ENCODE measurements at regions of chr6 and their contacts with region 1.

Region 1: DNA sequence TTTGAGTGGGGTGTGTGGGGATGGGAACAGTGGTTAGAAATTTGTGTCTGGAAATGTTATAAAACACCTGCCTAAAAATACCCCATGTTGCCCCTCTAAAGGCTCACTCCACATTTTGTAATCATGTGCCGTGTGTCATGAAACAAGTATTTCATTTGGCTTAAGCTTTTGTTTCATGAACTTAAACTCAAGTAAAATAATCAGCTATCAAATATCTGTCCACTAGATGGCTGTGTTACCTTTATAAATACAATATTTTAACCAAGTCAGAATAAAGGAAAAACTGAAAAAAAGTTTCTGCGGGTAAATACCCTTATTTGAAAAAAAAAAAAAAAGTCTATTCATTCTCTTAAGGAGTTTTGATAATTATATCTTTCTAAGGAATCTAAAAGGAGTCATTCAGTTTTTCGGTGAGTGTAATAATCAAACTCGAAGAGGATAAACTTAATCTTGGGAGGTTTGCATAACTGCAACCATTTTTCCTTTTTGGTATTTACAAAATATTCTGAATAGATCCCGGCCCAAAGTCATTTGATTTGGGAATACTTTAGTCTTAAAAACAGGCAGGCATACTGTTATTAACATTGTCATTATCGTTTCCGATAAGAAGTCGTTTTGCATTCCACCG is 29.9 kb upstream of the MTRF1L start:
- DNase-seq: no peak
- ATAC-seq: peak; percentile 46; the same call in 2 of the 3 replicates
- H3K4me3 ChIP-seq: no peak overlapping the region
- H3K27ac ChIP-seq: no peak overlapping the region
- H3K4me1 ChIP-seq: no peaks in the 10 kb centered on the region
- H3K27me3 ChIP-seq: peaks cover 0 to 3% of the 10 kb centered on the region in 2 experiments; a peak in 1 of 4 replicates
- CTCF ChIP-seq: peak in 2 of 3 experiments; percentile 13; a peak in 3 of 6 replicates
- EP300 ChIP-seq: no peak
- POLR2A ChIP-seq: no peak
- RAD21 ChIP-seq: peak; percentile 35; the same call in 1 of the 2 replicates

Region 2: GRCh38 chr6:153231048-153231646 is 198.8 kb after region 1 on chr6:
- CTCF ChIA-PET with region 1: interaction called, 7 read pairs
- POLR2A ChIA-PET with region 1: no interaction called
- RAD21 ChIA-PET with region 1: no interaction called
- SMC1A ChIA-PET with region 1: interaction called, 3 read pairs
- in situ Hi-C with region 1: no loop called
- intact Hi-C with region 1: loop called (anchors 10 kb)
- DNase-seq: no peak
- ATAC-seq: peak; percentile 57
- H3K4me3 ChIP-seq: no peak overlapping the region
- H3K27ac ChIP-seq: no peak overlapping the region
- H3K4me1 ChIP-seq: no peaks in the 10 kb centered on the region
- H3K27me3 ChIP-seq: no peaks in the 10 kb centered on the region
- CTCF ChIP-seq: peak; percentile 76 to 97 (median 88)
- EP300 ChIP-seq: no peak
- POLR2A ChIP-seq: no peak
- RAD21 ChIP-seq: peak; percentile 84

Region 3: GRCh38 chr6:153312641-153313040 is 280.3 kb after region 1 on chr6:
- CTCF ChIA-PET with region 1: interaction called, 30 read pairs
- POLR2A ChIA-PET with region 1: no interaction called
- RAD21 ChIA-PET with region 1: interaction called, 9 read pairs
- SMC1A ChIA-PET with region 1: interaction called, 7 read pairs
- in situ Hi-C with region 1: no loop called
- intact Hi-C with region 1: loop called (anchors 1 kb)
- DNase-seq: no peak
- ATAC-seq: peak; percentile 85
- H3K4me3 ChIP-seq: no peak overlapping the region
- H3K27ac ChIP-seq: no peak overlapping the region
- H3K4me1 ChIP-seq: no peaks in the 10 kb centered on the region
- H3K27me3 ChIP-seq: no peaks in the 10 kb centered on the region
- CTCF ChIP-seq: peak; percentile 55 to 74 (median 65)
- EP300 ChIP-seq: no peak
- POLR2A ChIP-seq: no peak
- RAD21 ChIP-seq: peak; percentile 59

Region 4: DNA sequence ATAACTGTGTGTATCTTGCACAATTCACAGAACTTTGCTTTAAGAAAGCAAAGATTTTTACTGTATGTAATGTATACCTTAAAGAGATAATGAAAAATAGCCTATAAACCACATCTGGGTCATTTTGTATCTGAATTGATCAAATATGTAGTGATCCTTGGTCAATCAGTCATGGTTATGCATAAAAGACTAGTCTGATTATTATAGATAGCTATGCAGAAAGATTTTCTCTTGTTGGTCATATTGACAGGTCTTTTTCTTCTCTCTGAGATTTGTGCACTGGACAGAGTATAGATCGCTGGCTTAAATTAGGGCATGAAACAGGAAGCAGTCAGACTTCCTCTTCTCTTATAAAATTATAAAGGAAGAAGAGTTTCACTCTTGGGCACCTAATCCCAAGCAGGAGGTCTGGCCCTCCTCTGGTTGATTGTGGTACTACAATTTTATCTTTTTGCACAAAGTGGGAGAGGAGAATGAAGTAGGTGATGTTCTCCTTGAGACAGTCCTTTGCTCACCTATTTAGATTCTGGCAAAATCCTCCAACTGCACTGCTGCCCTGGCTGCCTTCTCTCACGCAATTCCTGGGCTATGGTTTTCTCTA is 479.6 kb after region 1 on chr6:
- CTCF ChIA-PET with region 1: interaction called, 4 read pairs
- POLR2A ChIA-PET with region 1: no interaction called
- RAD21 ChIA-PET with region 1: interaction called, 3 read pairs
- SMC1A ChIA-PET with region 1: interaction called, 3 read pairs
- in situ Hi-C with region 1: loop called (anchors 10 kb)
- intact Hi-C with region 1: loop called (anchors 1 kb)
- DNase-seq: no peak
- ATAC-seq: peak; percentile 87
- H3K4me3 ChIP-seq: no peak overlapping the region
- H3K27ac ChIP-seq: no peak overlapping the region
- H3K4me1 ChIP-seq: no peaks in the 10 kb centered on the region
- H3K27me3 ChIP-seq: no peaks in the 10 kb centered on the region
- CTCF ChIP-seq: peak; percentile 50 to 72 (median 62)
- EP300 ChIP-seq: no peak
- POLR2A ChIP-seq: no peak
- RAD21 ChIP-seq: peak; percentile 53

Region 5: GRCh38 chr6:153947808-153948447 is 915.6 kb after region 1 on chr6:
- CTCF ChIA-PET with region 1: interaction called, 4 read pairs
- POLR2A ChIA-PET with region 1: no interaction called
- RAD21 ChIA-PET with region 1: interaction called, 3 read pairs
- SMC1A ChIA-PET with region 1: no interaction called
- in situ Hi-C with region 1: no loop called
- intact Hi-C with region 1: loop called (anchors 10 kb)
- DNase-seq: no peak
- ATAC-seq: 0 out of 3 replicates have a peak, but pooled peaks have one; percentile 42
- H3K4me3 ChIP-seq: no peak overlapping the region
- H3K27ac ChIP-seq: no peak overlapping the region
- H3K4me1 ChIP-seq: no peaks in the 10 kb centered on the region
- H3K27me3 ChIP-seq: no peaks in the 10 kb centered on the region; a peak in 1 of 4 replicates
- CTCF ChIP-seq: peak; percentile 78 to 96 (median 95)
- EP300 ChIP-seq: no peak
- POLR2A ChIP-seq: no peak
- RAD21 ChIP-seq: peak; percentile 72

Measured in GM12878 (cell line).